ENCODE measurements at regions of chr6 and their contacts with region 1.

Region 1: GRCh38 chr6:73732845-73733675 is 37.1 kb downstream of the CD109 start:
- H3K4me3 ChIP-seq: no peak overlapping the region
- H3K27ac ChIP-seq: no peak overlapping the region
- H3K4me1 ChIP-seq: no peaks in the 10 kb centered on the region
- CTCF ChIP-seq: peak; percentile 60

Region 2: DNA sequence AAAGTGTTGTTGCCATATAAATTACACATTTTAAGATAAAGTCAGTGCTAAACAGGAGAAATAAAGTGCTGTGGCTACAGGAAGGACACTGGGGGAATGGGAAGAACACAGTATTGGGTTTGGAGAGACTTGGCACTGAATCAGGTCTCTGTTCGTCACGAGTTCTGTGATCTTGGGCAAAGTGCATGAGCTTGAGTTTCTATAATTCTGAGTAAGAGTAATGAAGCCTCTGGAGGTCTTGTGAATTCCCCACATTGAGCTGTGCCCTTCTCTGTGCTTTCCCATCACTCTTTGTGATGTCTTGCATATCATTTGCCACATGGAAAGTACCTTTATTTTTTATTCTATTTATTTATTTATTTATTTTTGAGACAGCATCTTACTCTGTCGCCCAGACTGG is 195.4 kb before region 1 on chr6:
- CTCF ChIA-PET with region 1: no interaction called
- POLR2A ChIA-PET with region 1: no interaction called
- H3K4me3 ChIP-seq: no peak overlapping the region
- H3K27ac ChIP-seq: no peak overlapping the region
- H3K4me1 ChIP-seq: no peaks in the 10 kb centered on the region
- CTCF ChIP-seq: no peak

Region 3: GRCh38 chr6:73665686-73666319 is 67.3 kb before region 1 on chr6:
- CTCF ChIA-PET with region 1: interaction called, 21 read pairs
- POLR2A ChIA-PET with region 1: no interaction called
- H3K4me3 ChIP-seq: no peak overlapping the region
- H3K27ac ChIP-seq: no peak overlapping the region
- H3K4me1 ChIP-seq: no peaks in the 10 kb centered on the region
- CTCF ChIP-seq: no peak

Region 4: GRCh38 chr6:73691512-73691911 is 41.5 kb before region 1 on chr6:
- CTCF ChIA-PET with region 1: interaction called, 19 read pairs
- POLR2A ChIA-PET with region 1: no interaction called
- H3K4me3 ChIP-seq: no peak overlapping the region
- H3K27ac ChIP-seq: no peak overlapping the region
- H3K4me1 ChIP-seq: peaks cover 1% of the 10 kb centered on the region; the same call in 1 of the 2 replicates
- CTCF ChIP-seq: no peak

Region 5: GRCh38 chr6:73722318-73723060 is 10.6 kb before region 1 on chr6:
- CTCF ChIA-PET with region 1: interaction called, 40 read pairs
- POLR2A ChIA-PET with region 1: no interaction called
- H3K4me3 ChIP-seq: no peak overlapping the region
- H3K27ac ChIP-seq: no peak overlapping the region
- H3K4me1 ChIP-seq: no peaks in the 10 kb centered on the region
- CTCF ChIP-seq: no peak

Region 6: GRCh38 chr6:73752943-73753342 is 19.9 kb after region 1 on chr6:
- CTCF ChIA-PET with region 1: interaction called, 15 read pairs
- POLR2A ChIA-PET with region 1: no interaction called
- H3K4me3 ChIP-seq: no peak overlapping the region
- H3K27ac ChIP-seq: no peak overlapping the region
- H3K4me1 ChIP-seq: no peaks in the 10 kb centered on the region
- CTCF ChIP-seq: no peak

Region 7: GRCh38 chr6:73888050-73888449 is 155.0 kb after region 1 on chr6:
- CTCF ChIA-PET with region 1: no interaction called
- POLR2A ChIA-PET with region 1: no interaction called
- H3K4me3 ChIP-seq: no peak overlapping the region
- H3K27ac ChIP-seq: no peak overlapping the region
- H3K4me1 ChIP-seq: no peaks in the 10 kb centered on the region
- CTCF ChIP-seq: no peak

Region 8: GRCh38 chr6:73942592-73943186 is 209.6 kb after region 1 on chr6:
- CTCF ChIA-PET with region 1: no interaction called
- POLR2A ChIA-PET with region 1: no interaction called
- H3K4me3 ChIP-seq: no peak overlapping the region
- H3K27ac ChIP-seq: no peak overlapping the region
- H3K4me1 ChIP-seq: no peaks in the 10 kb centered on the region
- CTCF ChIP-seq: no peak

Measured in HEK293 (cell line).